Activated T-helper 1 cell treated with anti-CD3 and anti-CD28 coated beads, Interleukin-12 subunit alpha, Interleukin-12 subunit beta, Interleukin-2, Interleukin-4 antibody, amounts not matched to agents 30 ng/mL and 10 ng/mL and 1 ng/mL, durations not matched to agents 14 hours and 24 hours and 36 hours (primary cell): ENCODE measurements at regions of chr9 and their contacts with region 1.

Region 1: DNA sequence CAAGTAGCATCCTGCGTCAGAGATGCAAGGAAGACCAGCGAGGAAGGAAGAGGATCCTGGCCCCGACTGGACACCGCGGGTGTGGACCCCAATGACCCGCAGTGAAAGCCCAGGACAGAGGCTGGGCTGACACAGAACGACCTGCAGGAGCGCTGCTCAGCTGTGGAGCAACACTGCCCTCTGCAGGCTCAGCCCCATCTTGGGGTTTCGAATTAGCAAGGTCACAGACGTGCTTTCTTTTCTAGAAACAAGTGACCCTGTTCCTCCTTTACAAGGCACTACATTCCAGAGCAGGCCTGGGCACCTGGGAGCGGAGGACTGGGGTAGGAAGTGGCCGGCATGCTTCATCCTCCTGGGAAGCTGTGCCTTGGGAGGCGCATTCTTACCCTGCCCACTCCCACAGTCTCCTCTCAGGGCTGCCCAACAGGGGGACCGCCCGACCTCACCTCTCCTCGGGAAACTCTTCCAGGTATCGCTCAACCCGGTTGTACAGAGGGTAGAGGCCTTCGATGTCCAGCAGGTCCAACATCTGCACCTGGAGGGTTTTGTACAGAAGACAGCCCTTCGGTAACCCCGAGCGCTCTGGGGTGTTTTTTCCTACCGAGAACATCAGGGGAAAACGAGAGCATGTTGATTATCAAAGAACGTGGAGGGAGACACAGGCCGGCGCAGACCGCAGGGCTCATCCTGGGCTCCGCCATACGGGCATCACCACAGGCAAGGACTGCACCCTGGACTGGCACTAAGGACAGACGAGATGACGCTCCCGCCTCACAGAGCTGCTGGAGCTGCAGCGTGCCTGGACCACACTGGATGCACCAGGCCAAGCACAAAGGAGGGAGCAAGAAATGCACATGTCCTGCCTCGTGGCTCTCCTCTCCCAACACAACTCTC is 35.0 kb downstream of the IPPK start:
- DNase-seq: peak; percentile 43
- H3K4me3 Mint-ChIP-seq: no peak overlapping the region
- H3K27ac Mint-ChIP-seq: peak overlapping the region; percentile 71
- H3K4me1 Mint-ChIP-seq: peaks cover 24% of the 10 kb centered on the region
- H3K27me3 Mint-ChIP-seq: no peaks in the 10 kb centered on the region

Region 2: GRCh38 chr9:92140074-92140753 is 494.7 kb before region 1 on chr9:
- intact Hi-C with region 1: loop called (anchors 1 kb)
- DNase-seq: peak; percentile 54
- H3K4me3 Mint-ChIP-seq: no peak overlapping the region
- H3K27ac Mint-ChIP-seq: no peak overlapping the region
- H3K4me1 Mint-ChIP-seq: peaks cover 7% of the 10 kb centered on the region
- H3K27me3 Mint-ChIP-seq: peaks cover 33% of the 10 kb centered on the region

Region 3: DNA sequence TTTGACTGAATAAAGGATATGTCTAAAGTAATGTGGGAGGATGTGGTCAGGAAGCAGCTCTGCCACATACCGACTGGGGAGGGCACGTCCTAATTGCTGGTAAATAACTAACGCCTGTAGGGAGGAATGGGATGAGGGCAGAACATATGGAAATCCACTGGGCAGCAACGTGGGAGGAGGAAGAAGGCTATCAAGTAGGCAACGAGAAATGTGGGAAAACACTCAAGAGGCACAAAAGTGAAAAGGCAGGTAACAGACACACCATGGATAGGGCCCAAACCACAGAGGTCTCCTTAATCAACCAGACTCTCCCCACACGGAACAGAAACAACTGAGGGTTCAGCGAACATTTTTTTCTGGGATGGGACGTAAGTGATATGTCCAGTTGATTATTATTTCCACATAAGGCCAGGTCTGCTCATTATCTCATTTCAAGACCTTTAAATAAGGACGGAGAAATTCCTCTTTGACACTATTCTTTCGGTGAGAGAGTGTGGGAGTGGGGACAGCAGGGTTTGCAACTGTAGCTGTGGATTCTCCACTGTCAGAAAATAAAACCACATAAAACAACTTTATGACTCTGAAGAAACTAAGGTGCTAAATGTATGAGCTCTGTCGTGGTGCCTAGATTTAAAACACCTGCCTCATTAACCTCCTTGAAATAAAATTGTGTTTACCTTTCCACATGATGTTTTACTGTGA is 358.5 kb before region 1 on chr9:
- intact Hi-C with region 1: loop called (anchors 5 kb)
- DNase-seq: no peak
- H3K4me3 Mint-ChIP-seq: peak overlapping the region; percentile 61
- H3K27ac Mint-ChIP-seq: peak overlapping the region; percentile 75
- H3K4me1 Mint-ChIP-seq: peaks cover 36% of the 10 kb centered on the region
- H3K27me3 Mint-ChIP-seq: no peaks in the 10 kb centered on the region

Region 4: DNA sequence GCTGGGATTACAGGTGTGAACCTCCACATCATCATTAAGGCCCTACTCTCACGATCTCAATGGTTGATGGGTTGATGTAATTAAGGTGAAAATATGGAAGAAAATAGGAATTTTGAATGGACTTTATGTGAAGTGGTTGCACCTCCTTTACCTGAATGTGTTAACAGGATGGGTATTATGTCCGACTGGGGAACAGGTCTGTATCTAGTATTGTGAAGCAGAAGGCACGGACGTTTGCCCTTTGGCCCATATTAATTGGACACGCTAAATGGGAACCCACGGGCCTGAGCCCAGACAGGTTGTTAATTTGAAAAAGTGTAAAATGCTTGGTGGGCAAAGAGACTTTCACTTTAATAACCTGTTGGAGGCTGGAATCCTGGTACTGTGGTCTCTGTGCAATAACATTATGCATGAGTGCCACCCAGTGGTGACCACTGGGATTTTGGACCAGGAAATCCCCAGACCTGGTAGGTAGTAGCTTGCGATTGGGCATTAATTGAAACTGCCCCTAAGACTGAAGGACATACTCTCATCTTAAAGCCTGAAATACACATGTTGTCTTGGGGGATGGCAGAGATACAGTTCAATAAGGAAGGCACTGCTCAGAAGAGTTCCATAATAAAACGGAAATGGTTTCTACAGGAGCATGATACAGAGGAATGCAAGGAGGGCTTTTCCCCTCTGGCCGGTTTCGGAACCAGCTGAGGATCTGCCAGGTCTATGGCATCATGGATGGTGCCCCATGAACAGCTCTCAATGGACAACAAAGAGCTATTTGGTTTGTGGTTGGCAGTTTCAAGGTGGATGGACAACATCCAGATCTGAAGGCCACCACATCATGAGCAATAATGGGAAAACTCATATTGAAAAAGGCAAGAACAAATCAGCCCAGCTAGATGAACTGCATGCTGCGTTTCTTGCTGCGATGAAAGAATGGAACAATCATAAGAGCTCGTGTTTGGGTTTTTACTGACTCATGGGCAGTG is 155.9 kb after region 1 on chr9:
- intact Hi-C with region 1: loop called (anchors 10 kb)
- DNase-seq: peak; percentile 56
- H3K4me3 Mint-ChIP-seq: no peak overlapping the region
- H3K27ac Mint-ChIP-seq: no peak overlapping the region
- H3K4me1 Mint-ChIP-seq: peaks cover 12% of the 10 kb centered on the region
- H3K27me3 Mint-ChIP-seq: peaks cover 13% of the 10 kb centered on the region